WTC11 (cell line): ENCODE measurements at regions of chr22 and their contacts with region 1.

Region 1: GRCh38 chr22:18929459-18929858 is 6.6 kb downstream of the PRODH start:
- DNase-seq: no peak
- ATAC-seq: peak; percentile 91
- H3K4me3 Mint-ChIP-seq: no peak overlapping the region
- H3K27ac Mint-ChIP-seq: no peak overlapping the region
- H3K4me1 Mint-ChIP-seq: no peaks in the 10 kb centered on the region
- H3K27me3 Mint-ChIP-seq: no peaks in the 10 kb centered on the region
- CTCF ChIP-seq: no peak

Region 2: DNA sequence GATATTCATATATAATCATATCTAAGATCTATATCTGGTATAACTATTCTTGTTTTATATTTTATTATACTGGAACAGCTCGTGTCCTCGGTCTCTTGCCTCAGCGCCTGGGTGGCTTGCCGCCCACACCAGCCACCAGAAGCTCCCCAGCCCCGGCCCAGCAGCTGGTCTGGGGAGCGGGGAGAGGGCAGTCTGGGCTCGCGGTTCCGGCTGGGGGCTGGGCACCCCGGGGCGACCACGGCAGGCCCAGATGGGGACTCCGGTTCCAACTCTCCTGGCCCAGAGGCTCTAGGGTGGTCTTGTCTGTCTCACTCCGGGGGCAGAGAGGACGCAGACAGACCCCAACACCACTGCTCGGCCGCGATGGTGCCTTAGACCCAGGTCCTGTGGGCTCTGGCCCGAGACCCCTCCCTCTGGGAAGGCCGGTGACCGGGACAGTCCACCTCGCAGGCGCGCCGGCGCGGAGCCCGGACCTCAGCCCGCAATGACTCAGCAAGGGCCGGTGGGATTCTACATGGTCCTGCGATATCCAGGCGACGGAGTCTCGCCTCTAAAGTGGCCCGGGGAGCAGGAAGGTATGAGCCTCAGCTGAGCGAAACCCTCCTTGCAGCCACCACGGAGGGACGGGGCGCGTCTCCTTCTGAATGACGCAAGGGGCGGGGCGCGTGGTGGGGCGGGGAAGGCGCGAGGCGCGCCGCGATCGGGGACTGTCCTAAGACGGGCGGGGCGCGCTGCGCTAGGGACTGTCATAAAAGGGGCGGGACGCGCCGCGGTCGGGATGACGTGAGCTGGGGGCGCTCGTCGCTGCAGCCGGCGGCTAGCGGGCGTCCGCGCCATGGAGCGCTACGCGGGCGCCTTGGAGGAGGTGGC is 23.7 kb before region 1 on chr22 and contains the start of gene DGCR6:
- CTCF ChIA-PET with region 1: interaction called, 75 read pairs
- POLR2A ChIA-PET with region 1: interaction called, 8 read pairs
- DNase-seq: no peak
- ATAC-seq: peak; percentile 51
- H3K4me3 Mint-ChIP-seq: no peak within 1 kb of the TSS
- H3K27ac Mint-ChIP-seq: no peak within 1 kb of the TSS
- H3K4me1 Mint-ChIP-seq: peaks cover 4% of the 10 kb centered on the region
- H3K27me3 Mint-ChIP-seq: no peaks in the 10 kb centered on the region
- CTCF ChIP-seq: no peak
- total RNA-seq, gene DGCR6: 2.4 to 4.7 TPM (median 3.8 TPM) in 3 replicates

Region 3: GRCh38 chr22:19066531-19067271 is 137.2 kb after region 1 on chr22:
- CTCF ChIA-PET with region 1: no interaction called
- POLR2A ChIA-PET with region 1: no interaction called
- DNase-seq: no peak
- ATAC-seq: no peak
- H3K4me3 Mint-ChIP-seq: no peak overlapping the region
- H3K27ac Mint-ChIP-seq: no peak overlapping the region
- H3K4me1 Mint-ChIP-seq: no peaks in the 10 kb centered on the region
- H3K27me3 Mint-ChIP-seq: no peaks in the 10 kb centered on the region
- CTCF ChIP-seq: no peak